ENCODE measurements at regions of chr12 and their contacts with region 1.

Region 1: DNA sequence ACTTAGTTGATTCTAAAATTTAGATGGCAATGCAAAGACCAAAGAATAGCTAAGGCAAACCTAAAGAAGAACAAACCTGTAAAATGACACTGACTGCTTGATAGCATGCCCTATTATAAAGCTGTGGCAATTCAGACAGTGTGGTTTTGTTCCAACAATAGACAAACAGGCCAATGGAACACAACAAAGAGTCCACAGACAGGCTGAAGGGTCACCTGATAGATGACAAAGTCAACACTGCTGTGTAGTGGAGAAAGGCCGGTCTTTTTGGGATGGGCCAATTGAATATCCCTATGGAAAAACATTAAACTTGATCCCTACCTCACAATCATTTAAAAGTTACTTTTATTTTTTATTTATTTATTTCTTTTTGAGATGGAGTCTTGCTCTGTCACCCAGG is 33.8 kb upstream of the SLC25A3 start:
- DNase-seq: no peak
- H3K4me3 ChIP-seq: no peak overlapping the region
- H3K27ac ChIP-seq: no peak overlapping the region
- H3K4me1 ChIP-seq: no peaks in the 10 kb centered on the region
- H3K27me3 ChIP-seq: no peaks in the 10 kb centered on the region
- CTCF ChIP-seq: no peak
- POLR2A ChIP-seq: no peak

Region 2: DNA sequence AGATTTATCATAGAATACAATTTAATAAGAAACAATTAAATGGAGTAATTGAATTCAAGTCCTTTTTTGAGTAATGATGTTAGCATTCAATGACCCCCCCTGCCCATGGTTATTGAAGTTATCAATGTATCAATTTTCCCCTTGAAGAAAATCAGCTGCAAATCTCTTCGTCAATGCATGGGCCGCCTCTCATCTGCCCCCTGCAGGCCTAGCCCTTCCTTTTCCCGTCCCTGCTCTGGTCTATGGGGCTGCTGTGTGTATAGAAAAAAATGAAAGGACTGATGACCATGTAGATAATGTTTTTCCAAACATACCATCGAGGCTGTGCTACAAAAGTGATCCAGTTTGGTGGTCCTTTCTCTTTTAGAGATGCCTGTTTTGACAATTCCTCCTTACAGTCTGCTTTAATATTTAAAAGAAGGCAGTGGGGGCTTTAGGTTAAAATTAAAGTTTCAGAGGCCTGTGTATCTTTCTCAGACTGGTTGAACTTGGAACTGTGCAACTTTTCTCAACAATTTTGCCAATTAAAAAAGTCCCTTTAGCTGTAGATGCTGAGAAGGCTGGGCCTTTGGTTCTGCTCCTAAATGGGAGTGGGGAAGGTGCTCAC is 183.8 kb after region 1 on chr12:
- intact Hi-C with region 1: no loop called
- DNase-seq: peak in 3 of 7 donors; percentile 18 to 34 (median 23)
- H3K4me3 ChIP-seq: no peak overlapping the region
- H3K27ac ChIP-seq: no peak overlapping the region
- H3K4me1 ChIP-seq: no peaks in the 10 kb centered on the region
- H3K27me3 ChIP-seq: no peaks in the 10 kb centered on the region
- CTCF ChIP-seq: peak in 5 of 6 experiments; percentile 19 to 45 (median 38)
- POLR2A ChIP-seq: no peak

Region 3: DNA sequence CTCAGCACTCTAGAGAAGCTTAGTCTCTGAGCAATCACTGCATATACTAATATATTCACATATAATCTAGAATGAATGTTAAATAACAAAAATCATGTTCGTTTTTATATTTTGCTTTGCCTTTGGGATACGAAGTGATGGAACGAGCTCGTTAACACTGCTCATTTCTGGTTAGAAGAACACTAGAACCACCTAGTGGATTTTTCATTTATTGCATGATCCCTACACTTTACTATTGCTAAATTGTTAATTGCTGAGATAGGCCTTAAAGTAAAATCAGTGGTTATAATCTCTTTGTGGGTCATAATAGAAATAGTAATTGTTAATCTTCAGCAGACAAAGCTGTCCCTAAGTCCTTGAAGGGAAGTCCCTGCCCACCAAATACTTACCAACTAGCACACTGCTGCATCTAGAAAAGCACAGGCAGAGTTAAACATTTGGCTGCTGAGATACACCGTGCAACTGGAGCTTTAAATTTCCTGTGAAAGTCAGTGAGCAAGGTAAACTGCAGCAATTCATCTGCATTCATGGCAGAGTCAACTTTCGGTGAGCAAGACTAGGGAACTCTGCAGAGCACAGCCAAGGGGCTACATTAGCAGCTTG is 439.1 kb after region 1 on chr12:
- intact Hi-C with region 1: loop called in 1 of 2 experiments (anchors 10 kb)
- DNase-seq: peak in 1 of 7 donors; percentile 7
- H3K4me3 ChIP-seq: no peak overlapping the region
- H3K27ac ChIP-seq: peak overlapping the region in 1 of 5 donors; percentile 8
- H3K4me1 ChIP-seq: peaks cover 0 to 7% of the 10 kb centered on the region in 2 donors
- H3K27me3 ChIP-seq: no peaks in the 10 kb centered on the region
- CTCF ChIP-seq: peak; percentile 53 to 93 (median 79)
- POLR2A ChIP-seq: no peak